ENCODE measurements at regions of chr6 and their contacts with region 1.

Region 1: DNA sequence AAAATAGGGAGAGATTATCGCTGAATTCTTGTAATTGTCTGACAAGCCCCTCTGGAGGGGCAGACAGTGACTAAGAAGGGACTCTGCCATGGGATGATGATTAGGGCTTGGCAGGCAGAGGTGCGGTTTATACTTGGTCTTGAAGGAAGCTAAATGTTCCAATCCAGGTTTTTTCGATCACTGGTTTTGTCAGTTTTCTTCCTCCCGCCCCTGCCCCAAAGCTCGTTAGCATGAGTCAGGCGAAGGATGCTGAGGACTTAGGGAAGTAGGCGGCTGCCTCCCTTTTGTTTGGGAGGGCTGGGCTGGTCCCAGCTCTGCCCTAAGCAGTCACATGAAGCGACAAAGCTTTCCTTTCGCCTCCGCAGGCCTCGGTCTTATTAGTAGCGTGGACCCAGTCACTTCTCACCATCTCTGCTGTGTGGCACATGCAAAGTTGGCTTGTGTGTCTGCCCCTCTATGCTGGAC is 314.2 kb downstream of the CDC5L start:
- DNase-seq: no peak

Region 2: GRCh38 chr6:44667668-44668390 is 33.8 kb before region 1 on chr6:
- intact Hi-C with region 1: loop called in 1 of 2 experiments (anchors 2 kb)
- DNase-seq: peak; percentile 69

Measured in posterior vena cava (tissue), 2 donors.